IMR-90 (cell line): ENCODE measurements at regions of chr2 and their contacts with region 1.

Region 1: DNA sequence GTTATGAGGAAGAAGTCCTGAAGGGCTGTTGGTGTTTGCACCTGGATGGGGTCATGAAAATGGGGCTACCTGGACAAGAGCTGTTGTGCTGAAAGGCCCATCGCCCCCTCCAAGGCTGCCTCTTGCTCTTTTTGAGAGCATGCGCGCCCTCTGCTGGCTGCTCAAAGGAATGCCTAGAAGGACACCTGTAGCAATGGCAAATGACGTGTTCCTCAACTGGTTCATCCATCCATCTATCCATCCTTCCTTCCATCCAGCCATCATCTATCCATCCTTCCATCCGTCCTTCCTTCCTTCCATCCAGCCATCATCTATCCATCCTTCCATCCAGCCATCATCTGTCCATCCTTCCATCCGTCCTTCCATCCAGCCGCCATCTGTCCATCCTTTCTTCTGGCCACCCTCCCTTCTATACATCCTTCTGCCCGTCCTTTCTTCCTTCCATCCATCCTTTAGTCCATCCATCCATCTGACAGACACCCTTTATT is 17.2 kb upstream of the RPL31 start:
- DNase-seq: peak; percentile 69
- ATAC-seq: peak; percentile 82
- H3K4me3 ChIP-seq: no peak overlapping the region
- H3K27ac ChIP-seq: no peak overlapping the region
- H3K4me1 ChIP-seq: 0 out of 2 replicates have a peak, but pooled peaks cover 2% of the 10 kb centered on the region
- H3K27me3 ChIP-seq: no peaks in the 10 kb centered on the region
- CTCF ChIP-seq: peak; percentile 87
- POLR2A ChIP-seq: no peak
- RAD21 ChIP-seq: peak; percentile 96

Region 2: DNA sequence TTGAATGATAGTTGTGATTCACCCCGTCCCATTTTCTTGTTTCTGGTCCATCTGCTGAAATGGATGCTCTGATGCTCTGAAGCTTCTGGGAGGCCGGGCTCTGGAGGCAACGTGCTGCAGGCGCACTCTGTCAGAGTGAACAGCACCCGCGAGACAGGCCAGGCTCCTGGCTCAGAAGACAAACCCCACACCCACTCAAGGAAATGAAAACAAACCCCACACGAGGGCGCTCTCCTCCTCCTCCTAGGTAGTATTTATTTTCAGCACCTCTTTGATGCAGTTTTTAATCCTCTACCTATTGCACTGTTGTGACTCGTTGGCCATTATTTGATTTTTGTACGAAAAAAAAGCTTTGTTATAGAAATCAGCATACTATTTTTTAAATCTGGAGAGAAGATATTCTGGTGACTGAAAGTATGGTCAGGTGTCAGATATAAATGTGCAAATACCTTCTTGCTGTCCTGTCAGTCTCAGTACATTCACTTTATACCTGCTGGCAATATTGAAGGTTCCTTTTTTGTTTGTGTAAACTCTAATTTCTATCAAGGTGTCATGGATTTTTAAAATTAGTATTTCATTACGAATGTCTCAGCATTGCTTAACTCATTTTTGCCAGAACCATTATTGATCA is 557.2 kb before region 1 on chr2:
- CTCF ChIA-PET with region 1: no interaction called
- POLR2A ChIA-PET with region 1: no interaction called
- dilution Hi-C with region 1: no loop called
- in situ Hi-C with region 1: no loop called
- intact Hi-C with region 1: loop called (anchors 10 kb)
- DNase-seq: peak; percentile 38
- ATAC-seq: peak; percentile 40; the same call in 1 of the 2 replicates
- H3K4me3 ChIP-seq: no peak overlapping the region
- H3K27ac ChIP-seq: no peak overlapping the region
- H3K4me1 ChIP-seq: no peaks in the 10 kb centered on the region
- H3K27me3 ChIP-seq: peaks cover 17% of the 10 kb centered on the region
- CTCF ChIP-seq: peak; percentile 50
- POLR2A ChIP-seq: no peak
- RAD21 ChIP-seq: no peak; the same call in 1 of the 2 replicates

Region 3: GRCh38 chr2:100902833-100903405 is 82.0 kb before region 1 on chr2:
- CTCF ChIA-PET with region 1: no interaction called
- POLR2A ChIA-PET with region 1: no interaction called
- dilution Hi-C with region 1: no loop called
- in situ Hi-C with region 1: no loop called
- intact Hi-C with region 1: loop called (anchors 1 kb)
- DNase-seq: peak; percentile 97
- ATAC-seq: peak; percentile 96
- H3K4me3 ChIP-seq: no peak overlapping the region
- H3K27ac ChIP-seq: peak overlapping the region; percentile 86
- H3K4me1 ChIP-seq: peaks cover 16% of the 10 kb centered on the region
- H3K27me3 ChIP-seq: no peaks in the 10 kb centered on the region
- CTCF ChIP-seq: peak; percentile 27; the same call in 1 of the 2 replicates
- POLR2A ChIP-seq: no peak
- RAD21 ChIP-seq: peak; percentile 48

Region 4: DNA sequence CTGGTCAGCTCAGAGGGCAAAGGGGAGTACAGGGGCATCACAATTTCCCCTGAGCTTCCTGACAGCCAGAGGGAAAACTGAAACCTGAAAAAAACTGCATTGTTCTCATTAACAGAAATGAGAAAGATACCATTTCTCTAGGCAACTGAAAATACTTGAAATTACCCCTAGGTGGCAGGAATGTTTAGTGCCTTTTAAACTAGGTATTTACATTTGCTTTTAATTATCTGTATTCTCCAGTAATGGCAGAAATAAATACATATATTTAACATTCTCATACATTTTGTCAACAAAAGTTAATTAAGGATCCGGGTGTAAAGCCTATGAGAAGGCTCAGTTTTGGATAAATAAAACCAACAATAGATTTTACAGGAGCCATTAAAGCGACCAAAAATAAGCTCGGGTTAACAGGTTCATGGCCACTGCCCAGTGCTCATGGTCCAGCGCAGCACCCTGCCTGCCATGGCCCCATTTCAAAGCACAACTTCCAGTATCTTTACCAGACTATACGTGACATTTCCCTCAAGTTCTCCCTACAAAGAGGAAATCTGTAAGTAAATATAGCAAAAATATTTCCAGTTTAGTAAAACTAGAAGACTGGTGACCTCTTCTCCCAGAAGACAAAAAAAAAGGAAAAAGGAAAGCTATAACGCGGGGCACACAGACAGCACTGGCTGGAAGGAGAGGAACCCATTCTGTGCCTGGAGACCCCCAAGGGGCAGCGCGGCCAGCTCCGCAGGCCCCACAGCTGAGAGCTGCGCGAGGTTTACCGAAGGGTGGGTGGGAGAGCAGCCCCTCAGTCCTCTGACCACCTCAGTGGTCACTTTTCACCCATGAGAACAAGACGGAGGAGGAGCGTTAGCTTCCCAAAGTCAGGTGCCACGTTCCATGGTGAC is 51.9 kb after region 1 on chr2:
- CTCF ChIA-PET with region 1: no interaction called
- POLR2A ChIA-PET with region 1: no interaction called
- dilution Hi-C with region 1: no loop called
- in situ Hi-C with region 1: no loop called
- intact Hi-C with region 1: no loop called
- DNase-seq: peak; percentile 33
- ATAC-seq: peak; percentile 64
- H3K4me3 ChIP-seq: no peak overlapping the region
- H3K27ac ChIP-seq: no peak overlapping the region
- H3K4me1 ChIP-seq: no peaks in the 10 kb centered on the region
- H3K27me3 ChIP-seq: no peaks in the 10 kb centered on the region
- CTCF ChIP-seq: peak; percentile 78
- POLR2A ChIP-seq: no peak
- RAD21 ChIP-seq: peak; percentile 79